MCF 10A (cell line): ENCODE measurements at regions of chr20 and their contacts with region 1.

Region 1: DNA sequence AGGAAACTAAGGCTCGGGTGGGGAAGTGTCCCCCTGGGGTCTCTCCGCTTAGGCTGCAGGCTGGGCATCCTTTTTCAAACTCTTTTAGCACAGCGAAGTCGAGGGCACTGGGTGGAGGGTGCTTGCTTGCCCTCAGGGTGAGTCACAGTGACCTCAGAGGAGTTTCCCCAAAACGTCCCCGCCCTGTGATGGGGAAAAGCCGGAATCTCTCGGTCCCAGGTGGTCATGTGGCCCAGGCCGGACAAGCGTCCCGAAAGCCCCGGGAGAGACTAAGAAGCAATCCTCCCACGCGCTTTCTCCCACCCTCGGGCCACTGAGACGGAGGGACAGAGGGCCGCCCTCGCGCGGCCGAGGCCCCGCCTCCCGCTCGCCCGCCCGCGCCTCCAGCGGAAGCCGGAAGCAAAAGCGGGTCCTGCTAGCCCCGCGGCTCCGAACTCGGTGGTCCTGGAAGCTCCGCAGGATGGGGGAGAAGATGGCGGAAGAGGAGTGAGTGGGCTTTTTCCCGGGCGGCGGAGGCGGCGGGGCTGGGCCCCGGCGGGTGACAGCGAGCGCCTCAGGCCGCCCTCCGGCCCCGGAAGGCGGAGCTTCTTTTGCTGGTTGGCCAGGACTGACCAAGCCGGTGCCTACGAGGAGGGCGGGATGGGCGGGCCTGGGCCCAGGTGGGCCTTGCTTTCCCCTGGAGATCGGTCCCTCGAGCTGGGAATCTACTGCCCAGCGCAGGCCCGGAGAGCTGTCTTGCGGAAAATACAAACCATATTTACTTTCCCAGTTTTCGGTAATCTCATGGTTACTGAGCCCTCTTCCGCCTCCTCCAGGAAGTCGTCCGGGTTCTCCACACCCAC is at the start of gene SLC9A8:
- DNase-seq: peak; percentile 95
- H3K4me3 Mint-ChIP-seq: peak within 1 kb of the TSS; percentile 87
- H3K27ac Mint-ChIP-seq: peak within 1 kb of the TSS; percentile 71
- H3K4me1 Mint-ChIP-seq: peaks cover 32% of the 10 kb centered on the region
- H3K27me3 Mint-ChIP-seq: no peaks in the 10 kb centered on the region
- CTCF ChIP-seq: no peak
- total RNA-seq, gene SLC9A8: 14.6 and 16.5 TPM in 2 replicates

Region 2: DNA sequence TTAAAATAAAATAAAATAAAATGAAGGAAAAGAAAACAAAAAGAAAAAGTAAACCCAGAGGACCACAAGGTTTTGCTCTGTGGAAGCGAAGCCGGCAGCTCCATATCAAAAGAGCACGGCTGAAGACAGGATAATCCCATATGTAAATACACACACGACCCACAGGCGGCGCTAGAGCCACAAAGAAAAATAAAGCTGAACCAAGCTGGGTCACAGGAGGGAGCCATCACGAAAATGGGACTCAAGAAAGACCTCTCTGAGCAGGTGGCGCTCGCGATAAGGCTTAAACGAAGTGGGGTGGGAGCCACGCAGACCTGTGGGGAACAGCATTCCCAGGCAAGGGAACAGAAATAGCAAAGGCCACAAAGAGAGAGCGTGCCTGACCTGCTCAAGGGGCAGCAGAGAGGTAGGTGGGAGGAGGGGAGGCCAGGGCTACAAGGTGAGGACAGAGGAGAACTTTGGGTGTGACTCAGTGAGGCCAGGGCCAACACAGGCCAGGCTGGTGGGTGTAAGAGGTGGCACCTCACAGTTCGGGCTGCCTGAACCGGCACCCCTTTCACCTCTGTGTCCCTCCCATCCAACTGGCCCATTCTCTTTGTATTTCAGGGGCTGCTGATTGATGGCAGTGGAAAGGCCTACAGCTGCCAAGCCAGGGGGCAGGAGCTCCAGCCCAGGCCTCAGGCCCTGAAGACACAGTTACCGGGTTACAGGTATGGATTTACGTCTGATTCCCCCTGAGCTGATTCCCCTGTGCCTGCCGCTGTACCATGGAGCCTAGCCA is 270.8 kb before region 1 on chr20:
- CTCF ChIA-PET with region 1: no interaction called
- POLR2A ChIA-PET with region 1: no interaction called
- intact Hi-C with region 1: no loop called
- DNase-seq: peak; percentile 86
- H3K4me3 Mint-ChIP-seq: no peak overlapping the region
- H3K27ac Mint-ChIP-seq: no peak overlapping the region
- H3K4me1 Mint-ChIP-seq: no peaks in the 10 kb centered on the region
- H3K27me3 Mint-ChIP-seq: no peaks in the 10 kb centered on the region
- CTCF ChIP-seq: peak; percentile 78

Region 3: DNA sequence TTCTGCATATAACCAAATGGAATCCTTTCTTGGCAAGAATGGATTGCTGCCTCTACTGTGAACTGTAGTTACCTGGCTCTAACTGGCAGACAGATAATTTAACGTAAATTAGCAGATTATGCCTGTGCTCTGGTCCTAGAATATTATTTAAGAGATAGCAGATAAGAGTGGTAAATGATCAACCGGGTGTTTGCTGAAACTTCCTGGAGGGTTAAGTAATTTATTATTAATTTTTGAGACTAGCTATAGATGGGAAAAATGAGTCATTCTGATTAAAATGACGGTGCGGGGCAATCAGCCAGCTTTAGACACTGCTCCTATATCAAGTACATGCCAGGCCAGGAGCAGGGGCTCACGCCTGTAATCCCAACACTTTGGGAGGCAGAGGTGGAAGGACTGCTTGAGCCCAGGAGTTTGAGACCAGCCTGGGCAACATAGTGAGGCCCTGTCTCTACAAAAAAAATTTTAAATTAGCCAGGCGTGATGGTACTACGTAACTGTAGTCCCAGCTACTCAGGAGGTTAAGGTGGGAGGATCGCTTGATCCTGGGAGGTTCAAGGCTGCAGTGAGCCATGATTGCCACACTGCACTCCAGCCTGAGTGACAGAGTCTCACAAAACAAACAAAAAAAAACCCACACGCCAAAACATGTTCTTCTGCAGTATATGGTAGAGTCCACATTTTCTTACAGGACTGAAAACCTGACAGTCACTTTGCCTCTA is 121.6 kb before region 1 on chr20:
- CTCF ChIA-PET with region 1: no interaction called
- POLR2A ChIA-PET with region 1: interaction called, 16 read pairs
- intact Hi-C with region 1: no loop called
- DNase-seq: peak; percentile 75
- H3K4me3 Mint-ChIP-seq: no peak overlapping the region
- H3K27ac Mint-ChIP-seq: peak overlapping the region; percentile 81
- H3K4me1 Mint-ChIP-seq: peaks cover 48% of the 10 kb centered on the region
- H3K27me3 Mint-ChIP-seq: no peaks in the 10 kb centered on the region
- CTCF ChIP-seq: no peak

Region 4: GRCh38 chr20:49768204-49769047 is 44.3 kb before region 1 on chr20:
- CTCF ChIA-PET with region 1: no interaction called
- POLR2A ChIA-PET with region 1: interaction called, 13 read pairs
- intact Hi-C with region 1: no loop called
- DNase-seq: peak; percentile 100
- H3K4me3 Mint-ChIP-seq: peak overlapping the region; percentile 38
- H3K27ac Mint-ChIP-seq: peak overlapping the region; percentile 93
- H3K4me1 Mint-ChIP-seq: peaks cover 40% of the 10 kb centered on the region
- H3K27me3 Mint-ChIP-seq: no peaks in the 10 kb centered on the region
- CTCF ChIP-seq: no peak

Region 5: DNA sequence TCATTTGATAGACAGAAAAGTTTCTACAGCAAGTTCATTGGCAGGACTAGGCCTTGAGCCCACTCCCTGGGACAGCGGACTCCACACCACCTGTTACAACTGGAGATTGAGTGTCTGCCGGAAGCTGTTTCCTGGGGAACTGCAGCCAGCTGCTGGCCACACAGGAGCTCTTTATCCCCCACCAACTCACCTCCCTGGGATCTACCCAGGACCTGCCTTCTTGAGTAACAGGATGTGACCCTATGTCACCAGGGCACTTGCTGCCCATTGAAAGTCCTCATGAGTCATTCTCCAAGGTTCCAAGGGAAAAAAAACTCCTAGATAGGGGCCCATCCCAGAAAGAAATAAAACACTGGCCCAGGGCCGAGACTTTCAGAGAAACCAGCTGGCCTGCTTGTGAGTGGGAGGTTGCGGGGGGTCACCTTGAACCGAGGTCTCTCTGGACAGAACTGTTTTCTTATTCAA is 37.4 kb before region 1 on chr20:
- CTCF ChIA-PET with region 1: interaction called, 4 read pairs
- POLR2A ChIA-PET with region 1: interaction called, 24 read pairs
- intact Hi-C with region 1: no loop called
- DNase-seq: peak; percentile 98
- H3K4me3 Mint-ChIP-seq: no peak overlapping the region
- H3K27ac Mint-ChIP-seq: peak overlapping the region; percentile 79
- H3K4me1 Mint-ChIP-seq: peaks cover 40% of the 10 kb centered on the region
- H3K27me3 Mint-ChIP-seq: no peaks in the 10 kb centered on the region
- CTCF ChIP-seq: no peak

Region 6: DNA sequence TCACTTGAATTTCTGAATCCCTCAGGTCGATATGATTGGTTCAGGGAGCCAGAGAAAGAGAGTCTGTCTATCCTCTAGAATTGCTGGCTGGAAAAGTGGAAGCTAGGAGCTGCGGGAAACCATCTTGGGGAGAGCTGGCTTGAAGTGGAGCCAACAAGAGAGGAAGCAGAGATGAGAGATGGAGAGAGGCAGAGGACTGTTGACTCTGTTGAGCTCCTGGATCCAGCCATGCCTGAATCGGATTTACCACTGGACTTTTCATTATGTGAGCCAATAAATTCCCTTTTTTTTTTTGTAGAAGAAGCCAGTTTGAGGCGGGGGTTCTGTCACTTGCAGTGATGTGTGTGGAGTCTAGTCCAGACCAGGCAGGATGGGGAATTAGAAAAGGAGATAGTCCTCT is 14.0 kb before region 1 on chr20:
- CTCF ChIA-PET with region 1: no interaction called
- POLR2A ChIA-PET with region 1: interaction called, 10 read pairs
- intact Hi-C with region 1: no loop called
- DNase-seq: no peak
- H3K4me3 Mint-ChIP-seq: no peak overlapping the region
- H3K27ac Mint-ChIP-seq: no peak overlapping the region
- H3K4me1 Mint-ChIP-seq: peaks cover 16% of the 10 kb centered on the region
- H3K27me3 Mint-ChIP-seq: no peaks in the 10 kb centered on the region
- CTCF ChIP-seq: no peak